H1 (cell line): ENCODE measurements at regions of chr15 and their contacts with region 1.

Region 1: GRCh38 chr15:90001683-90002427 is 731 bp downstream of the ZNF710 start:
- DNase-seq: peak in 1 of 2 experiments; percentile 65
- H3K4me3 ChIP-seq: peak overlapping the region; percentile 56 to 88 (median 71)
- H3K27ac ChIP-seq: no peak overlapping the region; the same call in 1 of the 2 replicates
- H3K4me1 ChIP-seq: peaks cover 18 to 33% (median 20%) of the 10 kb centered on the region in 4 experiments
- H3K27me3 ChIP-seq: peaks cover 0 to 7% (median 2%) of the 10 kb centered on the region in 4 experiments; a peak in 2 of 7 replicates
- CTCF ChIP-seq: no peak
- EP300 ChIP-seq: no peak; a peak in 1 of 3 replicates
- POLR2A ChIP-seq: no peak
- RAD21 ChIP-seq: no peak

Region 2: GRCh38 chr15:89642106-89642505 is 359.7 kb before region 1 on chr15:
- CTCF ChIA-PET with region 1: no interaction called
- POLR2A ChIA-PET with region 1: no interaction called
- DNase-seq: no peak
- H3K4me3 ChIP-seq: no peak overlapping the region
- H3K27ac ChIP-seq: no peak overlapping the region
- H3K4me1 ChIP-seq: no peaks in the 10 kb centered on the region
- H3K27me3 ChIP-seq: no peaks in the 10 kb centered on the region
- CTCF ChIP-seq: no peak
- EP300 ChIP-seq: no peak
- POLR2A ChIP-seq: no peak
- RAD21 ChIP-seq: no peak

Region 3: DNA sequence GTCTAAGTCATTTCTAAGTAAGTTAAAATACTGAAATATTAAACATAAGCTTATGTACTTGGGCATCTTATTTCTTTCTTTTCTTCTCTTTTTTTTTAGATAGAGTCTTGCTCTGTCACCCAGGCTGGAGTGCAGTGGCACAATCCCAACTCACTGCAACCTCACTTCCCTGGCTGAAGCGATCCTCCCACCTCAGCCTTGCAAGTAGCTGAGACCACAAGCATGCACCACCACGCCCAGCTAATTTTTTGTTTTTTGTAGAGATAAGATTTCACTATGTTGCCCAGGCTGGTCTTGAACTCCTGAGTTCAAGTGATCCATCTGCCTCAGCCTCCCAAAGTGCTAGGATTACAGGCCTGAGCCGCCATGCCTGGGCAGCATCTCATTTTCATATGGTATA is 16.7 kb before region 1 on chr15:
- CTCF ChIA-PET with region 1: interaction called, 7 read pairs
- POLR2A ChIA-PET with region 1: interaction called, 19 read pairs
- DNase-seq: no peak
- H3K4me3 ChIP-seq: no peak overlapping the region
- H3K27ac ChIP-seq: no peak overlapping the region
- H3K4me1 ChIP-seq: peaks cover 0 to 8% (median 2%) of the 10 kb centered on the region in 4 experiments; a peak in 4 of 7 replicates
- H3K27me3 ChIP-seq: peaks cover 18 to 43% (median 38%) of the 10 kb centered on the region in 4 experiments
- CTCF ChIP-seq: no peak
- EP300 ChIP-seq: no peak
- POLR2A ChIP-seq: no peak
- RAD21 ChIP-seq: no peak

Region 4: GRCh38 chr15:90016721-90017120 is 14.9 kb after region 1 on chr15:
- CTCF ChIA-PET with region 1: interaction called, 4 read pairs
- POLR2A ChIA-PET with region 1: interaction called, 17 read pairs
- DNase-seq: no peak
- H3K4me3 ChIP-seq: no peak overlapping the region
- H3K27ac ChIP-seq: no peak overlapping the region
- H3K4me1 ChIP-seq: peaks cover 2 to 18% (median 6%) of the 10 kb centered on the region in 4 experiments; a peak in 6 of 7 replicates
- H3K27me3 ChIP-seq: no peaks in the 10 kb centered on the region
- CTCF ChIP-seq: no peak
- EP300 ChIP-seq: no peak
- POLR2A ChIP-seq: no peak
- RAD21 ChIP-seq: no peak

Region 5: GRCh38 chr15:90059208-90059985 is 57.5 kb after region 1 on chr15:
- CTCF ChIA-PET with region 1: no interaction called
- POLR2A ChIA-PET with region 1: interaction called, 29 read pairs
- DNase-seq: peak in 1 of 2 experiments; percentile 64
- H3K4me3 ChIP-seq: peak overlapping the region in 1 of 4 experiments; percentile 19; a peak in 1 of 8 replicates
- H3K27ac ChIP-seq: peak overlapping the region; percentile 69
- H3K4me1 ChIP-seq: peaks cover 8 to 50% (median 36%) of the 10 kb centered on the region in 4 experiments
- H3K27me3 ChIP-seq: no peaks in the 10 kb centered on the region
- CTCF ChIP-seq: no peak
- EP300 ChIP-seq: no peak; a peak in 1 of 3 replicates
- POLR2A ChIP-seq: peak in 1 of 2 experiments; percentile 30; a peak in 1 of 3 replicates
- RAD21 ChIP-seq: peak in 1 of 2 experiments; percentile 8; a peak in 1 of 4 replicates